HEK293T (cell line): ENCODE measurements at regions of chr6 and their contacts with region 1.

Region 1: DNA sequence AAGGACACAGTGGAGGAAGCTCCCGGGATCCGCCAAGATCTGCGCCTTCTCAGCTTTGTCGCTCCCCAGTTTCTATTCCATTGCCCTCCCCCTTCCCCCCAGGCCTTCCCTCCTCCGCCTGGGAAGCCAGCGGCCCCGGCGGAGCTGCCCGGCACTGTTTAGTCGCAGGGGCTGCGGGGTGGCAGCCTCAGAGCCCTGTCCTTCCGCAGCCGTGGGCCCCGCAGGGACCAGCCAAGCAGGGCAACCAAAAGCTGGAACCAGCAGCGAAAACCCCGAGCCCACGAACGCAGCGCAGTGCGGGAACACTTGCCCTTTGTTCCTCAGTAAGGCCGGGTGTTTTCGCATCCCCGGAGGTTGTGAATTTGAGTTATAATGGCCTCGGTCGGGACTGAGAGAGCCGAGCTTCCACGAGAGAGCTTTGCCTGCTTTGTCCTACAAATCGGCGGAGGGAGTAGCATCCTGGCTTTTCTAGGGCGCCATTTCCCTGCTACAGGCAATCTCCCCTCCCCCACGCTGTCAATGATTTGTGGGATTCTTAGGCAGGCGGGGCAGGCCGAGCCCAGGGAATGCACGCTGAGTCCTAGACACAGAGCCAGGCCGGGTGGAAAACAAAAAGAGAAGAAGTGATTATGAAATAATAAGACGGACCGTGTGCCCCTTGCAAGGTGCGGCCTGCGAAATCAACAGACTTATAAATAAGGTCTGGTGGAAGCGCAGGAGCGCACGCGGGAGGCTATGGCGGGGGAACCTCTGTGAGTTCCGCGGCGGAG is 4.0 kb upstream of the TUBB2B start:
- DNase-seq: peak; percentile 72

Region 2: GRCh38 chr6:3162565-3163247 is 68.7 kb before region 1 on chr6:
- CTCF ChIA-PET with region 1: no interaction called
- POLR2A ChIA-PET with region 1: interaction called, 11 read pairs
- DNase-seq: peak; percentile 78

Region 3: DNA sequence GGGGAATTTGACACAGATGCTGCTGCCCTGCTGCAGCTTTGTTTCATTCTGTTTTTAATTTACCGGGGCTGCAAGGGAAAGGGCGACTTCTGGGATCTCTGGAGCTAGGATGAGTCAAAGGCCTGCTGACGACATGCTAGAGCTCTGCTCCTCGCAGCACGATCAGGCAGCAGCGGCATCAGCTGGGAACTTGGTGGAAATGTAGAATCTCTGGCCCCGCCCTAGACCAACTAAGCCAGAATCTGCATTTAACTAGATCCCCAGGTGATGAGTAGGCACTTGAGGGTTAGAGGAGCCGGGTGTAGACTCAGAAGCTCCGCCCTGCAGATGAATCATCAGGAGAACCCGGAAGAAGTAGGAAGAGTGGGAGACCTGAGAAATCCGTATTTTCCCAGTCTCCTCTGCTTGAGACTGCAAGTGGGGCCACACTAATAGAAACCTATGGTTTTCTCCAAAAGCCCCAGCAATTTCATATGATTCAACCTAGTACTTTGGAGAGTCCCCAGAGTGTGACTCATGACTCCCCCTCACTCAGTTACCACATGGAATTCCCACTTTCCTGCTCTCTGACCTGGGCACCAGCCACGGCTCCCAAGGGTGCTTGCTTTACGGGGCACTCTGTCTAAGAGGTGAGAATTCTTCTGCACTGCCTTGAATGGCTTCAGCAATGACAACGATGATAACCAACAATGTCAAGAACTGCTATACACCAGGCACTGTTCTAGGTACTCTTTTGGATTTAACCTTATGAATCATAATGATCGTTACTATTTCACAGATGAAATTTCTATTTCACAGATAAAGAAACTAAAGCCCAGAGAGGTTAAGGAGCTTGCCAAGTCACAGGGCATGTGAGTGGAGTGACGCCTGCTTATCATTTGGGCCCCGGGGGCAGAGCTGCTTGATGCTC is 22.1 kb before region 1 on chr6:
- CTCF ChIA-PET with region 1: interaction called, 3 read pairs
- POLR2A ChIA-PET with region 1: interaction called, 20 read pairs
- DNase-seq: peak; percentile 57

Region 4: GRCh38 chr6:3251462-3252314 is 20.3 kb after region 1 on chr6:
- CTCF ChIA-PET with region 1: interaction called, 13 read pairs
- POLR2A ChIA-PET with region 1: interaction called, 53 read pairs
- DNase-seq: peak; percentile 88

Region 5: GRCh38 chr6:3258720-3259490 is 27.5 kb after region 1 on chr6 and contains the start of gene PSMG4:
- CTCF ChIA-PET with region 1: no interaction called
- POLR2A ChIA-PET with region 1: interaction called, 11 read pairs
- DNase-seq: peak; percentile 98